ENCODE measurements at regions of chr2 and their contacts with region 1.

Region 1: DNA sequence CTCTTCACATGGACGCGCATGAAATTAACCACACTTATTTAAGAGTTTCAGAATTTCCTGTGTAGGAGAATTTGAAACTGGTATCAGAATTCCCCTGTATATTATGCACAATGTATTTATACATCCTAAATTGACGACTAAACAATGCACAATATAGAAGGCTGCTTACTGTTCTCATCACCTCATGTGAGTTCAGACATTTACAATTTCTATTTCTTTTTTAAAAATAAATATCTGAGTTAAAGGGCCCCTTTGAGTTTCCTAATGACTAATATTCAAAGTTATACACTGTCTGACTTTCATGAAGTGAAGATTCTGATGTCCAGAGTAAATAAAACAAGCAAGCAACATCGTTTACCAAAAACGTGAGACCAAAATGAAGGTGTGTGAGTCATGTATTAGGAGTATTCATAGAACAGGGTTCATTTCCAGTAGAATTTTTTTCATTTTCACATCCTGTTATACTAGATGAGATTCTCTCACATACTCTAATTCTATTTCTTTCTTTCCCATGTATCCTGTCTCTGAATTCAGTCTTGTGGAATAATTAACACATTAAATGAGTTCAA is 406.2 kb downstream of the NUP35 start:
- DNase-seq: no peak
- ATAC-seq: peak; percentile 87
- H3K4me3 ChIP-seq: no peak overlapping the region
- H3K27ac ChIP-seq: no peak overlapping the region
- H3K4me1 ChIP-seq: no peaks in the 10 kb centered on the region
- H3K27me3 ChIP-seq: no peaks in the 10 kb centered on the region
- CTCF ChIP-seq: no peak
- EP300 ChIP-seq: no peak
- POLR2A ChIP-seq: no peak
- RAD21 ChIP-seq: no peak

Region 2: DNA sequence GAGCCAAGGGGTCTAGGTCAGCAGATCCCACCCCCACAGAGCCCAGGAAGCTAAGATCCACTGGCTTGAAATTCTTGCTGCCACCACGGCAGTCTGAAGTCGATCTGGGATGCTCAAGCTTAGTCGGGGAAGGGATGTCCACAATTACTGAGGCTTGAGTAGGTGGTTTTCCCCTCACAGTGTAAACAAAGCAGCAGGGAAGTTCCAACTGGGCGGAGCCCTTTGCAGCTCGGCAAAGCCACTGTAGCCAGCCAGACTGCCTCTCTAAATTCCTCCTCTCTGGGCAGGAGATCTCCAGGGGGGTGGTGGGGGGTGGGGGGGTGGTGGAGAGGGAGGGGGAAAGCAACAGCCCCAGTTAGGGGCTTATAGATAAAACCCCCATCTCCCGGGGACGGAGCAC is 13.3 kb after region 1 on chr2:
- CTCF ChIA-PET with region 1: no interaction called
- POLR2A ChIA-PET with region 1: no interaction called
- RAD21 ChIA-PET with region 1: interaction called, 3 read pairs
- SMC1A ChIA-PET with region 1: interaction called, 12 read pairs
- in situ Hi-C with region 1: no loop called
- intact Hi-C with region 1: no loop called
- DNase-seq: peak; percentile 24
- ATAC-seq: peak; percentile 99
- H3K4me3 ChIP-seq: no peak overlapping the region
- H3K27ac ChIP-seq: no peak overlapping the region
- H3K4me1 ChIP-seq: peaks cover 6% of the 10 kb centered on the region
- H3K27me3 ChIP-seq: no peaks in the 10 kb centered on the region; a peak in 1 of 4 replicates
- CTCF ChIP-seq: no peak
- EP300 ChIP-seq: no peak
- POLR2A ChIP-seq: no peak
- RAD21 ChIP-seq: no peak

Measured in GM12878 (cell line).